CD4-positive, alpha-beta T cell (primary cell): ENCODE measurements at regions of chr2 and their contacts with region 1.

Region 1: GRCh38 chr2:134098321-134098720 is 155.6 kb upstream of the MGAT5 start:
- DNase-seq: no peak
- ATAC-seq: no peak
- H3K4me3 ChIP-seq: no peak overlapping the region
- H3K4me3 Mint-ChIP-seq: no peak overlapping the region
- H3K27ac ChIP-seq: no peak overlapping the region
- H3K27ac Mint-ChIP-seq: no peak overlapping the region
- H3K4me1 ChIP-seq: no peaks in the 10 kb centered on the region
- H3K4me1 Mint-ChIP-seq: no peaks in the 10 kb centered on the region
- H3K27me3 ChIP-seq: no peaks in the 10 kb centered on the region
- H3K27me3 Mint-ChIP-seq: peaks cover 12% of the 10 kb centered on the region
- CTCF ChIP-seq: no peak

Region 2: DNA sequence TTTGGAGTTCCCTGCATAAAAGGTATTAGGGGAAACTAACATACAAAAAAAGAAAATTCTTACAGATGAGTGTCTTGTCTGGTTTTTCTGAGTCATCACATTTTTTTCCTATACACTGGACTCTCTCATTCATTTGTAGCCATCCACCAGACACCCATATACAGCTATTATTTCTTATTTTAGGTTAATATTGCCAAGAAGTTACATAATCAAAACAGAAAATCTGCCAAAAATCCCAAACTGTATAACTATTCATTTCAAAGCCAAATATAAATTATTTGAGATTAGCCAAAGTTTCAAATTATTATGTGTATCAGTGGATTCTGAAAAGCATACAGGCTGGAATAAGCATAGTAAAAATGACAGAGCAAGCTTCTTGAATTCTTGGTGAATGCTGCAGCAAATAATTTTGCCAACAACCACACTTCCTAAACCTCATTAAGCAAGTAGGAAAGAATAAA is 721.3 kb before region 1 on chr2:
- CTCF ChIA-PET with region 1: no interaction called
- POLR2A ChIA-PET with region 1: no interaction called
- intact Hi-C with region 1: no loop called
- DNase-seq: no peak
- ATAC-seq: no peak
- H3K4me3 ChIP-seq: no peak overlapping the region
- H3K4me3 Mint-ChIP-seq: no peak overlapping the region
- H3K27ac ChIP-seq: no peak overlapping the region
- H3K27ac Mint-ChIP-seq: no peak overlapping the region
- H3K4me1 ChIP-seq: no peaks in the 10 kb centered on the region
- H3K4me1 Mint-ChIP-seq: no peaks in the 10 kb centered on the region
- H3K27me3 ChIP-seq: no peaks in the 10 kb centered on the region
- H3K27me3 Mint-ChIP-seq: no peaks in the 10 kb centered on the region
- CTCF ChIP-seq: no peak

Region 3: GRCh38 chr2:134869946-134870736 is 771.8 kb after region 1 on chr2:
- CTCF ChIA-PET with region 1: no interaction called
- POLR2A ChIA-PET with region 1: no interaction called
- intact Hi-C with region 1: loop called in 1 of 2 experiments (anchors 10 kb)
- DNase-seq: no peak
- ATAC-seq: no peak
- H3K4me3 ChIP-seq: no peak overlapping the region
- H3K4me3 Mint-ChIP-seq: no peak overlapping the region
- H3K27ac ChIP-seq: no peak overlapping the region
- H3K27ac Mint-ChIP-seq: no peak overlapping the region
- H3K4me1 ChIP-seq: no peaks in the 10 kb centered on the region
- H3K4me1 Mint-ChIP-seq: no peaks in the 10 kb centered on the region
- H3K27me3 ChIP-seq: no peaks in the 10 kb centered on the region
- H3K27me3 Mint-ChIP-seq: no peaks in the 10 kb centered on the region
- CTCF ChIP-seq: no peak